ENCODE measurements at regions of chr14 and their contacts with region 1.

Region 1: GRCh38 chr14:89303457-89304435 is 113.3 kb downstream of the FOXN3 start:
- DNase-seq: no peak
- H3K4me3 ChIP-seq: peak overlapping the region; percentile 12 to 49 (median 28)
- H3K27ac ChIP-seq: peak overlapping the region; percentile 77 to 91 (median 86)
- H3K4me1 ChIP-seq: peaks cover 51 to 68% (median 54%) of the 10 kb centered on the region in 4 donors
- H3K27me3 ChIP-seq: no peaks in the 10 kb centered on the region
- CTCF ChIP-seq: no peak
- EP300 ChIP-seq: peak; percentile 78
- POLR2A ChIP-seq: no peak

Region 2: GRCh38 chr14:89409961-89410360 is 106.2 kb after region 1 on chr14:
- intact Hi-C with region 1: loop called (anchors 5 kb)
- DNase-seq: no peak
- H3K4me3 ChIP-seq: peak overlapping the region in 1 of 4 donors; percentile 6
- H3K27ac ChIP-seq: peak overlapping the region; percentile 33 to 70 (median 62)
- H3K4me1 ChIP-seq: peaks cover 47 to 90% (median 76%) of the 10 kb centered on the region in 4 donors
- H3K27me3 ChIP-seq: no peaks in the 10 kb centered on the region
- CTCF ChIP-seq: no peak
- EP300 ChIP-seq: no peak
- POLR2A ChIP-seq: no peak

Measured in esophagus muscularis mucosa (tissue), 4 donors.